Heart right ventricle (tissue), 16 donors: ENCODE measurements at regions of chr12 and their contacts with region 1.

Region 1: GRCh38 chr12:32568241-32568640 is 110.9 kb upstream of the DNM1L start:
- DNase-seq: no peak
- ATAC-seq: peak in 6 of 8 donors; percentile 52 to 68 (median 62)
- H3K4me3 ChIP-seq: no peak overlapping the region
- H3K27ac ChIP-seq: peak overlapping the region in 7 of 10 donors; percentile 50 to 79 (median 67)
- H3K4me1 ChIP-seq: peaks cover 0 to 64% (median 57%) of the 10 kb centered on the region in 9 donors
- H3K27me3 ChIP-seq: no peaks in the 10 kb centered on the region
- CTCF ChIP-seq: no peak

Region 2: GRCh38 chr12:32501835-32502333 is 66.4 kb before region 1 on chr12:
- intact Hi-C with region 1: no loop called
- DNase-seq: peak in 1 of 2 donors; percentile 28
- ATAC-seq: peak; percentile 43 to 73 (median 60)
- H3K4me3 ChIP-seq: peak overlapping the region in 9 of 10 donors; percentile 8 to 47 (median 40)
- H3K27ac ChIP-seq: peak overlapping the region in 9 of 10 donors; percentile 41 to 78 (median 62)
- H3K4me1 ChIP-seq: peaks cover 7 to 82% (median 71%) of the 10 kb centered on the region in 9 donors
- H3K27me3 ChIP-seq: no peaks in the 10 kb centered on the region
- CTCF ChIP-seq: no peak

Region 3: DNA sequence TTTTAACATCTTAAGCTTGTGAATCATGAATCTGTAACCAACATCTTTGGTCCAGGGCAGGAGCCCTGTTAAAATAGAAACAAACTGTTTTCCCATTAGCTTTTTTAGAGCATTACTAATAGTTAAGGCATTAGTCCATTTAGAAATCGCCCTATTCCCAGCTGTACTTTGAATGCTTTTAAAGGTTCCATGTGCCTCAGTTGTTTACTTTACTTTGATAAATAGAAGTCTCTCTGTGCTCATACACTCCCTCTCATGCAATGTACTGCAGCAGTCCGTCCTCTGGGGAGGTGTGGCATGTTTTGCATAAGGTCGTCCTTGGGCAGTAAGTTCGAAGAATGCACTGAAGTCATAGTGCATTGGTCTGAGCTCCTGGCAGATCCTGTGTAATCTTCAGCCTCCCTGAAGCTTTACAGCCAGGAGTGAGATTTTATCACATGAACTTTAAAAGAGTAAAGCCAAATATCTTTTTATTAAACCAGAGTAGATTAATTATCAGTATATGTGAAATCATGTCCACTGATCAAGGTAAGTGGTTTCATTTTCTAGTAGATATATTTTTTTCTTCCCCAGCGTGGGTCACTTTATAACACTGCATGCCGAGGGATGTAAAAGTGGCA is 34.2 kb before region 1 on chr12:
- intact Hi-C with region 1: loop called in 1 of 10 experiments (anchors 5 kb)
- DNase-seq: peak in 1 of 2 donors; percentile 53
- ATAC-seq: peak; percentile 73 to 92 (median 88)
- H3K4me3 ChIP-seq: peak overlapping the region; percentile 23 to 62 (median 52)
- H3K27ac ChIP-seq: peak overlapping the region; percentile 62 to 89 (median 75)
- H3K4me1 ChIP-seq: peaks cover 0 to 64% (median 57%) of the 10 kb centered on the region in 9 donors
- H3K27me3 ChIP-seq: no peaks in the 10 kb centered on the region
- CTCF ChIP-seq: no peak